Transverse colon (tissue), 4 donors: ENCODE measurements at regions of chr17 and their contacts with region 1.

Region 1: DNA sequence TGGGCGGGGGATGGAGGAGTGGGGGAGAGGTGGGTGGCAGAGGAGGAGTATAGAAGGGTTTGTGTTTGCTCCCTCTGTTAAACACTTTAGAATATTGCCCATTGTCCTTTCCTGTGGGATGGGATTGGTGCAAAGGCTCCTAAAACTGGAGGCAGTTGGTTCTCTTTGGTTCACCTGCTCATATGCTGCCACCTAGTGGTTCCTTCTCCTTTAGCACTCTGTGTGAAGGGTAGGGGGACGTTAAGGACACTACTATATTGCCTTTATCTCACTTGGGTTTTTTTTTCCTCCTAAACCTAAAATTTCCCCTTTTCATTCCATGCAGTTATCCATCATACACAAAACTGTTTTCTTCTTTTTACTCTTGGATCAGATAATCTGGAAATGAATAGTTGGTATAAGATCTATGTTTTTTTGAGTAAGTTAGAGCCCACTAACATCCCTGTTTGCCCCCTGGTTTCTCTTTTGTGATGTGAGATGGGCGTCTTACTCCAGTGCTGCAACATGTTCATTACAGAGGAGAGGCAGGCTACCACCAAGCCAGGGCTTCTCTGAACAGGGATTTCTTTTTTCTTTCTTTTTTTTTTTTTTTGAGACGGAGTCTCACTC is 23.8 kb downstream of the SNX11 start:
- DNase-seq: peak; percentile 47
- H3K4me3 ChIP-seq: no peak overlapping the region
- H3K27ac ChIP-seq: no peak overlapping the region
- H3K4me1 ChIP-seq: peaks cover 0 to 3% (median 0%) of the 10 kb centered on the region in 4 donors
- H3K27me3 ChIP-seq: no peaks in the 10 kb centered on the region
- CTCF ChIP-seq: peak; percentile 83 to 86 (median 85)
- EP300 ChIP-seq: no peak
- POLR2A ChIP-seq: no peak

Region 2: DNA sequence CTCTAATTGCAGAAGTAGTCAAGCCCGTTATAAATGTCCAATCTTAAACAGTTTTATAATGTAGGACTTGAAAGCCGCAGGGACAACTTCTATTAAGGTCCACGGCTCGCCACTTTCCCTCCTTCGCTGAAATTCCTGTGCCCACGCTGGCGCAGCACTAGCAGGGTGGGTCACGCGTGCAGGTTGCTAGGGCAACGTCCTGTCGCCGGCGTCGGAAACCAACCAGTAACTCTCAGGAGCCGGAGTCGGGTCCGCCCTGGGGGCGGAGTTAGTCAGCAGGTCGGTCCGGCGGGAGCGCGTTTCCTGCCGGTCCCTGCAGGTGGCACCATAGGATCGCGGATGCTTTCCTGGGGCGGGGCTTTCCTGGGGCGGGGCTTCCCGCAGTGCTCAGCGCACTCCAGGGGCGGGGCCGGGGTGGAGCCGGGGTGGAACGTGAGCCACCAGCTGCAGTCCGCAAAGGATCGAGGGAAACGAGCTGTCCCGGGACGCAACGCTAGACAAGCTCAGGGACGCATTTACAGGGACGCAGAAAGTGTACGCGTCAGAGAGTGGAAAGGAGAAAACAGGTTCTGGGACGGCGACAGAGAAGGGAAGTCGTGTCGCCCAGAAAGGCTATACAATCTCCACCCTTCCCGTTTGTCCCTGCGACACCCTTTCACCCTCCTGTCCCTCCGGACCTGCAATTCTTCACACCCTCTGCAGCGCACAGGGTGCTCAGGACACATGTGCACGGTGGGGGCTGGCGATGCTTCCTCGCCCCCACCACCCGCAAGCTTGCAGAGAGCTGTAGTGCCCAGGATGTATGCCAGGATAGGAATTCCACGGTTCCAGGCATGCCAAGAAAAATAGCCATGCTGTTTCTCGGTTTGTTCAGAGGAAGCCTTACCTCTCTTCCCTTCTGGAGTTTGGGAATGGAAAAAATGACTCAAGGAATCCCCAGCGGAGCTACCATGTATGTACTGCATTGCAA is 106.1 kb before region 1 on chr17:
- in situ Hi-C with region 1: loop called in 2 of 4 experiments (anchors 5 to 10 kb)
- intact Hi-C with region 1: loop called (anchors 5 kb)
- DNase-seq: peak; percentile 98
- H3K4me3 ChIP-seq: peak overlapping the region; percentile 17 to 51 (median 28)
- H3K27ac ChIP-seq: peak overlapping the region; percentile 66 to 84 (median 78)
- H3K4me1 ChIP-seq: peaks cover 35 to 38% (median 36%) of the 10 kb centered on the region in 4 donors
- H3K27me3 ChIP-seq: peaks cover 27% of the 10 kb centered on the region
- CTCF ChIP-seq: peak; percentile 69 to 89 (median 82)
- EP300 ChIP-seq: no peak
- POLR2A ChIP-seq: peak; percentile 27

Region 3: DNA sequence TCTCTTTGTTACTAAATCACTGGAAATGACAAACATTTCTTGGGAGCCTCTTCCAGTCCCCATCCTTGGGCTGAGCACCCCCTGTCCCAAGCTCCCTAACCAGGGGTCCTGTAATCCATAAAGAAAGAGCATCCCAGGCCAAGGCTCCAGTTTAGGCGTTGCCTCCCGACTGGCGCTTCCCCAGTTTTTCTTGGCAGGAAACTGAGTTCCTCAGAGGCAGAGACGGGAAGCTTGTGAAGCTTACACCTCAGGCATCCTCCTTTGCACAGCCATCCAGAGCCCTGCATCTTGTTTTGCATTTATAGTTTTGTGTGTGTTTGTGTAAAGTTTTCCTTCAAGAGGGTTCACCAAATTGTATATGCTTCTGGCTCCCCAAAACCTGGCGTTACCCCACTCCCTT is 100.8 kb before region 1 on chr17:
- in situ Hi-C with region 1: loop called in 2 of 4 experiments (anchors 5 to 10 kb)
- intact Hi-C with region 1: loop called (anchors 5 kb)
- DNase-seq: no peak
- H3K4me3 ChIP-seq: no peak overlapping the region
- H3K27ac ChIP-seq: no peak overlapping the region
- H3K4me1 ChIP-seq: peaks cover 12 to 15% (median 15%) of the 10 kb centered on the region in 4 donors
- H3K27me3 ChIP-seq: peaks cover 3% of the 10 kb centered on the region
- CTCF ChIP-seq: no peak
- EP300 ChIP-seq: no peak
- POLR2A ChIP-seq: no peak

Region 4: DNA sequence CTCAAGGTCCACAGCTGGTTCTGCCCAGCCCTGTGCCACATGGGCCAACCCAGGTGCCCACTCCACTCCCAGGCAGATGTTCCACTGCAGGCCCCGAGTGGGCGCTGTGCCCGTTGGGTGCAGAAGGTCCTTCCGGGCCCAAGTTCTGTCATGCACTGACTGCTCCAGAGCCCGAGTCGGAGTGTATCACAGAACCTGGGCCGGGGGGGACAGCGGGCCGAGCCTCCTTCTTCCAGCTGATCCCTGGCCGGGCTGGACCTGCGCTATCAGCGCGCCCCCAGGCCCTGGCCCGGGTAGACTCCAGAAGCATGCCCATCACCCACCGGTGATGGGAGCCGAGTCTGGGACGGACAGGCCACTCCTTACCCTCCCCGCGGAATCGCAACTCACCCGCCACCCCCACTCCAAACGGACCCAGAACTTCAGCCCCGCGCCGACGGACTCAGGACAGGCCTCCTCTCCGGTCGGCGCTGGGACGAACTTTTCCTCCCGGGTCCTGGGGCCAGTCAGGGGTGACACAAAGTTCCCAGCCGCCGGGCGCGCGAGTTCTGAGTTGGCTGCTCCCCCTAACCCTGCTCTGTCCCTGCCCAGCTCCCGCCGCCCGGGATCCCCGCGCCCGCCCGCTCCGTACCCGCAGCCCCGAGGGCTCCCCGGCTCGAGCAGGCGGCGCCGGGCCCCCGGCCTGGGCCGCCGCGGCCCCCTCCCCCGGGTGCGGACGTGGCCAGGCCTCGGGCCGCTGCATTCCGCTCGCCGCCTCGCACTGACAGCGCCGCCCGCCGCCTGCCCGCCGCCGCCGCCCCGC is 94.1 kb before region 1 on chr17 and contains the start of gene COPZ2:
- in situ Hi-C with region 1: loop called in 2 of 4 experiments (anchors 5 to 10 kb)
- intact Hi-C with region 1: no loop called
- DNase-seq: peak; percentile 69
- H3K4me3 ChIP-seq: peak within 1 kb of the TSS; percentile 36 to 64 (median 52)
- H3K27ac ChIP-seq: peak within 1 kb of the TSS; percentile 65 to 77 (median 70)
- H3K4me1 ChIP-seq: peaks cover 0 to 16% (median 7%) of the 10 kb centered on the region in 4 donors
- H3K27me3 ChIP-seq: peaks cover 38% of the 10 kb centered on the region
- CTCF ChIP-seq: peak; percentile 49 to 63 (median 53)
- EP300 ChIP-seq: no peak
- POLR2A ChIP-seq: no peak
- total RNA-seq, gene COPZ2: 6.0 to 11.2 (median 8.3) TPM

Region 5: DNA sequence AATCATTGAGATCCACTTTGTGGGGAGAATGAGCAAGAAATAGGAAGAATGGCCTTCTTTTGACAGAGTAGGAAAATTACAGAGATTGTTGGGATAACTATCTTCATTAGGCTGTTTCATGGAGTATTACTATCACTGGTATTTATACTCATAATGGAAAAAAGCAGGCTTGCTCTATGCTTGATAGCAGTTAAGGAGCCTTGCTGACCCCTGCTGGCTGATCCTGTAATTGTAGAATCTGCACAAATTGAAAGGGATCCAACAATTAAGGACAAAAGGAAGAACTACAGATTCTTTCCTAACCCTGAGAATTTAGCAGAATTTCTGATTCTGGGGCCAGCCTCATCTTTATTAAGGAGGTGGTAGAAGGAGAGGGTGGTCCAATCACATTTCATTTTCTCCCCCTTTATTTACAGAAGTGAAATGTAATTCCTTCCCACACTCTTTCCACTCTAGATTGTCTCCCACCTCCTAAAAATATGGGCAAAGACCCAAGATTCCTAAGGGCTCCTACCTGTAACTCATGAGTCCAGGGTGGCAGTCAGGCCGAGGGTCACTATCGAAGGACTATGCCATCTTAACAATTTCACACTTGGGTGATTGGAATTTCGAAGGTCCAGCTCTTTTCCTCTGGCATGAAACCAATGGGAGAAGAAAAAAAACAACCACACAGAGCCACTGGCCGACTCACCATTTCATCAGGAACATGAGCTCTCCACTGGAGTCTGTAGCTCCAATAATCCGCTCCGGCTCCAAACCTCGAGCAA is 56.8 kb before region 1 on chr17:
- in situ Hi-C with region 1: no loop called
- intact Hi-C with region 1: loop called (anchors 10 kb)
- DNase-seq: peak; percentile 84
- H3K4me3 ChIP-seq: no peak overlapping the region
- H3K27ac ChIP-seq: no peak overlapping the region
- H3K4me1 ChIP-seq: no peaks in the 10 kb centered on the region
- H3K27me3 ChIP-seq: no peaks in the 10 kb centered on the region
- CTCF ChIP-seq: peak; percentile 72 to 91 (median 79)
- EP300 ChIP-seq: no peak
- POLR2A ChIP-seq: no peak

Region 6: DNA sequence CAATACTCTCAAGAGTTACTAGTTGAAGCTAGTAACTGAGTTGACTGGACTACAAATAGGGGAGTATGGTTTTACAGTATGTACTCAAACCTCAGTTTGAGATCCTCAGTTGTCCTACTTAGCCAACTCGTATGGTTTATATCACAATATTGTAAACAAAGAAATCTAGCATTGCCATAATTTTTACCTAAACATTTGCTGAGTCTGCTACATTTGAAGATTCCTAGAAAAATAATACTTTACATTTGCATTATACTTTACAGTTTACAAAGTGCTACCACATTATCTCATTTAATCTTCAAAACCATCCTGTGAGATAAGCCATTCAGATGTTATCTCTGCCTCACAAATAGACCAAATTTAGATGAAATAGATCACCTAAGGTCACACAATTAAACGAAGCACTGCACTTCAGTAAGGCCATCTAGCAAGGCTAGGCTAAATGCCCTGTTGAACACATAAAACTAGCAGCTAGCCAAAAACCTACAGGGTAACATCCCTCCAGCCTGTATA is 46.3 kb before region 1 on chr17:
- in situ Hi-C with region 1: loop called in 3 of 4 experiments (anchors 5 to 10 kb)
- intact Hi-C with region 1: no loop called
- DNase-seq: no peak
- H3K4me3 ChIP-seq: no peak overlapping the region
- H3K27ac ChIP-seq: no peak overlapping the region
- H3K4me1 ChIP-seq: peaks cover 0 to 23% (median 17%) of the 10 kb centered on the region in 4 donors
- H3K27me3 ChIP-seq: no peaks in the 10 kb centered on the region
- CTCF ChIP-seq: no peak
- EP300 ChIP-seq: no peak
- POLR2A ChIP-seq: no peak